CD14-positive monocyte (primary cell): ENCODE measurements at regions of chr12 and their contacts with region 1.

Region 1: DNA sequence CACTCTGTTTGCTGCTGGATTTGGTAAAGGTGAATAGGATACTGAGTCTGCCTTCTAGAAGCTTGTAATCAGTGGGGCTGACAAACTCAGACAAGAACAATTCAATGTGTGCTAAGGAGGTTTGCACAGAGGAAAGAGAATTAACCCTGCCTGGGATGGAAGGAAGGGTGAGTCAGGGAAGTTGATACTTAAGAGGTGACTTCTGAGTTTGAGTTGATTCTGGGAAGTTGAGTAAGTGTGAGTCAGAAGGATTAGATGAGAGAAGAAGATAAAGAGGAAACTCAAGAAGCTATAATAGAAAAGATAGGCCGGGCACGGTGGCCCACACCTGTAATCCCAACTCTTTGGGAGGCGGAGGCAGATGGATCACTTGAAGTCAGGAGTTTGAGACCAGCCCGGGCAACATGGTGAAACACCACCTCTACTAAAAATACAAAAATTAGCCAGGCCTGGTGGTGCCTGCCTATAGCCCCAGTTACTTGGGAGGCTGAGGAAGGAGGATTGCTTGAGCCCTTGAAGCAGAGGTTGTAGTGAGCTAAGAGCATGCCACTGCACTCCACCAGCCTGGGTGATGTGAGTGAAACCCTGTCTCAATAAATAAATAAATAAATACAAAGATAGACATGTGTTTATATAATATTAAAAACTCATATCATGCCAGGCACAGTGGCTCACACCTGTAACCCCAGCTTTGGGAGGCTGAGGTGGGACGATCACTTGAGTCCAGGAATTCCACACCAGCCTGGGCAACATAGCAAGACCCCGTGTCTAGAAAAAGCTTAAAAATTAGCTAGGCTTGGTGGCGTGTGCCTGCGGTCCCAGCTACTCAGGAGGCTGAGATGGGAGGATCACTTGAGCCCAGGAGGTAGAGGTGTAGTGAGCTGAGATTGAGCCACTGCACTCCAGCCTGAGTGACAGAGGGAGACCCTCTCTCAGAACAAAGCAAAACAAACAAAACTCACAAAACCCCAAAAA is 126.8 kb upstream of the CPM start:
- DNase-seq: peak; percentile 76 to 90 (median 85)
- H3K4me3 ChIP-seq: no peak overlapping the region
- H3K4me3 Mint-ChIP-seq: no peak overlapping the region
- H3K27ac ChIP-seq: peak overlapping the region in 1 of 2 donors; percentile 47
- H3K27ac Mint-ChIP-seq: peak overlapping the region; percentile 12 to 85 (median 70)
- H3K4me1 ChIP-seq: peaks cover 29 to 35% of the 10 kb centered on the region in 2 donors
- H3K4me1 Mint-ChIP-seq: peaks cover 40% of the 10 kb centered on the region
- H3K27me3 ChIP-seq: no peaks in the 10 kb centered on the region
- H3K27me3 Mint-ChIP-seq: peaks cover 0 to 2% (median 0%) of the 10 kb centered on the region in 3 donors
- CTCF ChIP-seq: no peak

Region 2: GRCh38 chr12:69007101-69007854 is 52.5 kb before region 1 on chr12:
- intact Hi-C with region 1: loop called (anchors 5 kb)
- DNase-seq: peak; percentile 81 to 91 (median 88)
- H3K4me3 ChIP-seq: peak overlapping the region; percentile 41 to 95 (median 71)
- H3K4me3 Mint-ChIP-seq: peak overlapping the region; percentile 61 to 86
- H3K27ac ChIP-seq: peak overlapping the region; percentile 89 to 97
- H3K27ac Mint-ChIP-seq: peak overlapping the region; percentile 95 to 99 (median 98)
- H3K4me1 ChIP-seq: peaks cover 34 to 39% of the 10 kb centered on the region in 2 donors
- H3K4me1 Mint-ChIP-seq: peaks cover 37% of the 10 kb centered on the region
- H3K27me3 ChIP-seq: no peaks in the 10 kb centered on the region
- H3K27me3 Mint-ChIP-seq: peaks cover 0 to 5% (median 0%) of the 10 kb centered on the region in 3 donors
- CTCF ChIP-seq: no peak

Region 3: GRCh38 chr12:69243099-69244084 is 183.6 kb after region 1 on chr12:
- intact Hi-C with region 1: no loop called
- DNase-seq: no peak
- H3K4me3 ChIP-seq: no peak overlapping the region
- H3K4me3 Mint-ChIP-seq: peak overlapping the region in 1 of 2 donors; percentile 21
- H3K27ac ChIP-seq: peak overlapping the region in 1 of 2 donors; percentile 58
- H3K27ac Mint-ChIP-seq: peak overlapping the region in 6 of 7 donors; percentile 35 to 71 (median 52)
- H3K4me1 ChIP-seq: peaks cover 24 to 38% of the 10 kb centered on the region in 2 donors
- H3K4me1 Mint-ChIP-seq: peaks cover 53% of the 10 kb centered on the region
- H3K27me3 ChIP-seq: no peaks in the 10 kb centered on the region
- H3K27me3 Mint-ChIP-seq: peaks cover 0 to 2% (median 2%) of the 10 kb centered on the region in 3 donors
- CTCF ChIP-seq: no peak